ENCODE measurements at regions of chr7 and their contacts with region 1.

Region 1: GRCh38 chr7:23334482-23335056 is 35.4 kb downstream of the MALSU1 start:
- DNase-seq: peak; percentile 89
- H3K4me3 ChIP-seq: no peak overlapping the region
- CTCF ChIP-seq: no peak

Region 2: GRCh38 chr7:23347682-23348180 is 13.2 kb after region 1 on chr7:
- CTCF ChIA-PET with region 1: no interaction called
- POLR2A ChIA-PET with region 1: interaction called, 10 read pairs
- DNase-seq: peak; percentile 60
- H3K4me3 ChIP-seq: no peak overlapping the region
- CTCF ChIP-seq: no peak

Region 3: DNA sequence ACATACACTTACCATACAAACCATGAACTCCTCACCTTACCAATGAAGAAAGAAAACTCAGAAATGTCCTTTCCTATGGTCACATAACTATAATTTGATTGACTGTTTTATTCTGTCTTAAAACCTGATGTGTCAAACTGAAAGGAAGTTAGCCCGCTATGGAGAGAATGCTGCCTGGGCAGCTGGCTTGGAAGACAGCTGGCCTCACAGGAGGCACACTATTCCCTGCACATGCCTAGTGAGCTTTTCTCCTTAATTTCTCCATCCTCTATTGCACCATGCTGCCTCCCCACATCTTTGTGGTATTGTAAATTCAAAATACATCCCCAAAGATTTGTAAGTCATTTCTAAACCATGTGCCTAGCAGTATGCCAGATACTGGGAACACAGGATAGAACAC is 538.7 kb after region 1 on chr7:
- CTCF ChIA-PET with region 1: no interaction called
- POLR2A ChIA-PET with region 1: no interaction called
- DNase-seq: no peak
- H3K4me3 ChIP-seq: no peak overlapping the region
- CTCF ChIP-seq: no peak

Region 4: GRCh38 chr7:24216576-24217125 is 882.1 kb after region 1 on chr7:
- CTCF ChIA-PET with region 1: no interaction called
- POLR2A ChIA-PET with region 1: no interaction called
- DNase-seq: peak; percentile 55
- H3K4me3 ChIP-seq: no peak overlapping the region
- CTCF ChIP-seq: no peak

Measured in AG04449 (cell line).